Cardiac septum (tissue), 1 donor: ENCODE measurements at regions of chr10 and their contacts with region 1.

Region 1: GRCh38 chr10:6050801-6051445 is 11.2 kb downstream of the IL2RA start:
- DNase-seq: peak; percentile 76

Region 2: GRCh38 chr10:5813287-5814109 is 237.4 kb before region 1 on chr10 and contains the start of gene GDI2:
- intact Hi-C with region 1: no loop called
- DNase-seq: peak; percentile 98
- total RNA-seq, gene GDI2: 107 TPM

Region 3: DNA sequence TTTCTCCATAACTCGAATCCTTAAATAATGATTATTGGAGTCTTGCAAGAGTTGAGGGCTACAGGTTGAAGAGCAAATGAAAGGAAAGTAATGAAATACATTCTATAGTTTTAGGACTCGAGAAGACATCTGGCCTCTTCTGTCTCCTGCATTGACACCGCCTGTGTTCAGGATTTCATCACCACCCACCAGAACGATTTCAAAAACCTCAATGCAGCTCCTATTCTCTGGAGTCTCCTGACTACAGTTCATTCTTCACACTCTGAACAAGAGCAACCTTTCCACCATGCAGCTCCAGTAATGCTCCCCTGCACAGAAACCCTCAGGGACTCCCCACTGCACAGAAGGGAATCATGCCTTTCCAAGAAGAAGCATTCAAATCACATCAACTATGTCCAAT is 79.0 kb before region 1 on chr10:
- intact Hi-C with region 1: loop called (anchors 2 kb)
- DNase-seq: no peak